ENCODE measurements at regions of chr19 and their contacts with region 1.

Region 1: DNA sequence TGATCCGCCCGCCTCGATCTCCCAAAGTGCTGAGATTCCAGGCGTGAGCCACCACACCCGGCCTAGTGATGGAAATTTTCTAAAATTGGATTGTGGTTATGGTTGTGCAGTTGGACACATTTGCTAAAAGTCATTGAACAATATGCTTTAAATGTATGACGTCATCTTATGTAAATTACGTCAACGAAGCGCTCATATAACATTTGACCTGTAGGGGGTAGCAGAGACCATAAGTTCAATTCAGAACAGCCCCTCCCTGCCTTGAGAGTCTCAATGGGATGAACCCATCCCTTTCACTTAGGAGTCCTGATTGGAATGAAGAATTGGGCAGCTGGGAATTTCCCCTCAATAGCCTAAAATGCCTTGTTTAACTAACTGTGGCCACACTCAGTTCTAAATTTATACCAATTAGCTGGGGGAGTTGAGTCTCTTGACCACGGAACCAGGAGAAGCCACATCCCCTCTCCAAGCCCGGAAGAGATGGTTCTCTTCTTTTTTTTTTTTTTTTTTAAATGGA is 15.3 kb upstream of the TLE6 start:
- DNase-seq: peak in 1 of 3 donors; percentile 75
- ATAC-seq: peak; percentile 75
- H3K4me3 ChIP-seq: no peak overlapping the region
- H3K4me1 ChIP-seq: no peaks in the 10 kb centered on the region
- CTCF ChIP-seq: peak; percentile 35

Region 2: DNA sequence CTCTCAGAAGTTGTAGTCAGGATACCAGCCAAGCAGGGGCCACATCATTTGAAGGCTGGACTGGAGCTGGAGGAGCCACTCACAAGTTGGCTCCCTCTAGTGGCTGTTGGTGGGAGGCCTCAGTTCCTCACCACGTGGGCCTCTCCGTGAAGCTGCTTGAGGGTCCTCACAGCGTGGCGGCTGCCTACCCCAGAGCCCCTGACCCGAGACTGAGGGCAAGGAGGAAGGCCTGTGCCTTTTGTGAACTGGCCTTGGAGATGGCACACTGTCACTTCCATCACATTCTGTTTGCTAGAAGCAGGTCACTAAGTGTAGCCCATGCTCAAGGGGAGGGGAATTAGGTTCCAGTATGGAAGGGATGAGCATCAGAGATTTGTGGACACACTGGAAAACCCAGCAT is 146.7 kb after region 1 on chr19:
- intact Hi-C with region 1: loop called (anchors 10 kb)
- DNase-seq: peak in 2 of 3 donors; percentile 67 to 84
- ATAC-seq: peak; percentile 37
- H3K4me3 ChIP-seq: no peak overlapping the region
- H3K4me1 ChIP-seq: peaks cover 28% of the 10 kb centered on the region
- CTCF ChIP-seq: peak; percentile 83

Region 3: DNA sequence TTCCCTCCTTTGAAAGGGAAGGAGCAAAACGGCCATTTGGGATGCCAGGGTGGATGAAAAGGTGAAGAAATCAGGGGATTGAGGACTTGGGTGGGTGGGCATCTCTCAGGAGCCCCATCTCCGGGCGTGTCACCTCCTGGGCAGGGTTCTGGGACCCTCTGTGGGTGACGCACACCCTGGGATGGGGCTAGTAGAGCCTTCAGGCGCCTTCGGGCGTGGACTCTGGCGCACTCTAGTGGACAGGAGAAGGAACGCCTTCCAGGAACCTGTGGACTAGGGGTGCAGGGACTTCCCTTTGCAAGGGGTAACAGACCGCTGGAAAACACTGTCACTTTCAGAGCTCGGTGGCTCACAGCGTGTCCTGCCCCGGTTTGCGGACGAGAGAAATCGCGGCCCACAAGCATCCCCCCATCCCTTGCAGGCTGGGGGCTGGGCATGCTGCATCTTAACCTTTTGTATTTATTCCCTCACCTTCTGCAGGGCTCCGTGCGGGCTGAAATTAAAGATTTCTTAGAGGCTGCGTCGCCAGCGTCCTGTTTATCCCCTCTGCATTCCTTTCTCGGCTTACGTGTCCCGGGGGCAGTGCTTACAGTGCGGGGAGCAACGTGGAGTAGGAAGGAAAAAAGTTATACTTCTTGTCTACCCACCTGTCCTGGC is 201.3 kb after region 1 on chr19:
- intact Hi-C with region 1: loop called in 1 of 2 experiments (anchors 10 kb)
- DNase-seq: peak; percentile 58 to 73 (median 73)
- ATAC-seq: peak; percentile 95
- H3K4me3 ChIP-seq: no peak overlapping the region
- H3K4me1 ChIP-seq: peaks cover 3% of the 10 kb centered on the region
- CTCF ChIP-seq: peak; percentile 95

Measured in mucosa of descending colon (tissue), 3 donors.